RWPE1 (cell line): ENCODE measurements at regions of chr1 and their contacts with region 1.

Region 1: DNA sequence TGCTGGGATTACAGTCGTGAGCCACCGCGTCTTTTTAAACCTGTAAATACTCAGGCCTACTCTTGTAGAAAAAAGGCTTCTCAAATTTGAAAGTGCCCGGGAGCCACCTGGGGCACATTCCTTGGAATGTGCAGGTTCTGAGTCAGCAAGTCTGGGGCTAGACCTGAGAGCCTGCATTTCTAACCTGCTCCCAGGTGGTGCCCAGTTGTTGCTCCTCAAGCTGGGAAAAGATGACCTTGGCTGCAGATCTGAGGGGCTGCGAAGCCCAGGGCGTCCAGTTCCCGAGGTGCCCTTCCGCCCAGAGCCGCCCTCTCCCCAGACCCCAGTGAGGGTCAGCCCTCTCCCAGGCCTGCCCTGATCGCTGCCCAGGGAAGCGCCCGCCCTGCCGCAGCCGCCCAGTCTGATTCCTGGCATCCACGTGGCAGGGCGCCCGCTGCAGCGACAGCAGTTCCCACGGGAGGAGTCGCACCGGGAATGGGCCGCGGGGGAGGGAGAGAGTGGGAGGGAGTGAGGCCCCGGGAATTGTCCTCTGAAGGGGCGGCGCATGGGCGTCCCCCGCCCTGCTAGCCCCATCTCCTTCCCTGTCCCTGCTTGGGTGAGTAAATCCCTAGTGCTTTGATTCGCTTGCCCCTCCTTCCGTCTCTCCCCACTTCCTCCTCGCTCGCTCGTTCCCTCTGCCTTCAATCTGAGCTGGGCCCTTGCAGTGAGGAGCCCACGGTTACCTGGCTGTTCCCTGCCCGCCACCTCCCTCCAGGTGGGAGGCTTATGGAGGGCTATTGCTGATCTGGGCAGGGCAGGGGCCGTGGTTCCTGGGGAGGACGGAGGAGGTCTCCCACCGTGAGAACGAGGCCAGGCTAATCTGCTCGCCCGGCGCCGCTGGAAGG is 18.8 kb upstream of the TENT5B start:
- DNase-seq: peak; percentile 89
- H3K27ac ChIP-seq: peak overlapping the region; percentile 95
- CTCF ChIP-seq: no peak

Region 2: GRCh38 chr1:26811057-26811456 is 220.4 kb before region 1 on chr1:
- CTCF ChIA-PET with region 1: no interaction called
- POLR2A ChIA-PET with region 1: no interaction called
- DNase-seq: no peak
- H3K27ac ChIP-seq: no peak overlapping the region
- CTCF ChIP-seq: no peak

Region 3: GRCh38 chr1:27010989-27011764 is 20.3 kb before region 1 on chr1:
- CTCF ChIA-PET with region 1: interaction called, 4 read pairs
- POLR2A ChIA-PET with region 1: interaction called, 10 read pairs
- DNase-seq: peak; percentile 98
- H3K27ac ChIP-seq: peak overlapping the region; percentile 99
- CTCF ChIP-seq: no peak